ENCODE measurements at regions of chr1 and their contacts with region 1.

Region 1: DNA sequence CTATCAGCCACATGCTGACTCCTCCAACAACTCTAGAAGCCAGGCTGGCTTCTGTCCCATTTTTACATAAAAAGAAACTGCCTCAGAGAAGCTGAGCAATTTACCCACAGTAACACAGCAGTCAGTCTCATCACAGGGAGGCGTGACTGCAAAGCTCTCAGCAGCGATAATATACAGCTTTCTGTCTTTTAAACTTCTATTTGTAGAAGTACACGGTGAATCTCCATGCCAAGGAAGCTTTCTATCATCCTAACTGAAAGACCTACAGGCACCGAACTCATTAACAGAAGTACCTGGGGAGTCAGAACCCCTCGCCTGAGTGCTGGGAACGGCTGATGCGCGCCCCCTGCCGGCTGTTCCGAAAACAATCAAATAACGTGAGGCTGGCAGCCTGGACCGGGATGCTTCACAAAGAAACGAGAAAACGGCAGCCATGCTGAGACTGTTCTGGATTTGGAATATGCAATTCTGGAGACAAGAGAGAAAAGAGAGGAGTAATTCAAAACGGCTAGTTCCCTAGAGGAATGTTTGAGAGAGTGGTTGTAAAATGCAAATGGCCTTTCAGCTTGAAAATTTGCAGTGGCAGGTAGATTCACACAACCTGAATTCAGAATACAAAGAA is 43.5 kb upstream of the RAB4A start:
- DNase-seq: peak; percentile 79
- H3K4me3 ChIP-seq: no peak overlapping the region
- H3K27ac ChIP-seq: no peak overlapping the region
- H3K4me1 ChIP-seq: peaks cover 14% of the 10 kb centered on the region; the same call in 1 of the 2 replicates
- H3K27me3 ChIP-seq: peaks cover 27% of the 10 kb centered on the region

Region 2: GRCh38 chr1:228646717-228647522 is 580.5 kb before region 1 on chr1:
- in situ Hi-C with region 1: no loop called
- DNase-seq: peak; percentile 75
- H3K4me3 ChIP-seq: peak overlapping the region; percentile 83
- H3K27ac ChIP-seq: peak overlapping the region; percentile 41
- H3K4me1 ChIP-seq: no peaks in the 10 kb centered on the region
- H3K27me3 ChIP-seq: no peaks in the 10 kb centered on the region

Region 3: DNA sequence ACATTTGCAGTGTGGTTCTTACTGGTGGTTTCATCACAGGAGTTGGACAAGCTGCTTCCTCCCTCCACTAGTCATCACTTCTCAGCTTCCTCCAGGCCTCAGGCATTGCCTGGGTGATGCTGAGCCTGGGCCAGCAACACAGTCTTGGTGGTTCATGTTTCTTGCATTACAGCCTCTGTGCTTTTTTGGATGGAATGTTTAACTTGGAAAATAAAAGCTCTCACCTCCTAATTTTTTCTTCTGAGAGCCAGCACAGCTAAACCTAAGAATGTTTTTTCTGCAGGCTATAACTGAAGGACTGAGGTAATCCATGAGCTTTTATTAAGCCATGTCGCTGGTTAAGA is 558.2 kb before region 1 on chr1:
- in situ Hi-C with region 1: loop called (anchors 10 kb)
- DNase-seq: peak; percentile 85
- H3K4me3 ChIP-seq: no peak overlapping the region
- H3K27ac ChIP-seq: peak overlapping the region; percentile 43
- H3K4me1 ChIP-seq: peaks cover 12% of the 10 kb centered on the region
- H3K27me3 ChIP-seq: no peaks in the 10 kb centered on the region

Region 4: GRCh38 chr1:228734881-228735801 is 492.3 kb before region 1 on chr1 and contains the start of gene RHOU:
- in situ Hi-C with region 1: loop called (anchors 10 kb)
- DNase-seq: peak; percentile 77
- H3K4me3 ChIP-seq: peak within 1 kb of the TSS; percentile 75
- H3K27ac ChIP-seq: no peak within 1 kb of the TSS
- H3K4me1 ChIP-seq: no peaks in the 10 kb centered on the region
- H3K27me3 ChIP-seq: no peaks in the 10 kb centered on the region
- total RNA-seq, gene RHOU: 1.8 TPM in 2 replicates